Breast epithelium (tissue), 4 donors: ENCODE measurements at regions of chr18 and their contacts with region 1.

Region 1: GRCh38 chr18:11266781-11267480 is 117.6 kb upstream of the PIEZO2 start:
- DNase-seq: no peak
- H3K4me3 ChIP-seq: no peak overlapping the region
- H3K27ac ChIP-seq: no peak overlapping the region
- H3K4me1 ChIP-seq: no peaks in the 10 kb centered on the region
- H3K27me3 ChIP-seq: peaks cover 0 to 3% of the 10 kb centered on the region in 2 donors
- CTCF ChIP-seq: no peak
- POLR2A ChIP-seq: no peak

Region 2: GRCh38 chr18:9898792-9899549 is 1368.0 kb before region 1 on chr18:
- intact Hi-C with region 1: no loop called
- DNase-seq: no peak
- H3K4me3 ChIP-seq: no peak overlapping the region
- H3K27ac ChIP-seq: peak overlapping the region in 1 of 2 donors; percentile 30
- H3K4me1 ChIP-seq: no peaks in the 10 kb centered on the region
- H3K27me3 ChIP-seq: no peaks in the 10 kb centered on the region
- CTCF ChIP-seq: no peak
- POLR2A ChIP-seq: no peak

Region 3: DNA sequence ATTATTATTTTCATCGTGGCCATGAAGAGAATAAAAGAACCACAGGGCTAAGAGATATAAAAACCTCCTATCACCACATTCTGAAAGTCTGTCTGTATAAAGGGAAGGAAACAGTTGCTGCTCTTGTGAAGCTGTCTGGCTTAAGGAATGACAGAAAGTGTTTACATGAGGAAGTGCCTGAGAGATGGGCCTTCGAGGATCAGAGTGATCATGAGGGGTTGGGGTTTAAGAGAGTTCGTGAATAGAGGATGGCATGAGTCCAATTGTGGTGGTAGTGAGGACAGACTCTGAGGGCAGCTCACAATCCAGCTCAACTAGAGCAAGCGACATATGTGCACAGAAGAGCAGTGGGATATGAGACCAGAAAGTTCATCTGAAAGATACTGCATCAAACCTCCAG is 51.7 kb before region 1 on chr18:
- intact Hi-C with region 1: loop called (anchors 2 kb)
- DNase-seq: no peak
- H3K4me3 ChIP-seq: no peak overlapping the region
- H3K27ac ChIP-seq: no peak overlapping the region
- H3K4me1 ChIP-seq: no peaks in the 10 kb centered on the region
- H3K27me3 ChIP-seq: no peaks in the 10 kb centered on the region
- CTCF ChIP-seq: no peak
- POLR2A ChIP-seq: no peak

Region 4: GRCh38 chr18:12027046-12027445 is 760.1 kb after region 1 on chr18:
- intact Hi-C with region 1: no loop called
- DNase-seq: peak in 1 of 2 donors; percentile 77
- H3K4me3 ChIP-seq: no peak overlapping the region
- H3K27ac ChIP-seq: peak overlapping the region; percentile 65 to 74
- H3K4me1 ChIP-seq: no peaks in the 10 kb centered on the region
- H3K27me3 ChIP-seq: no peaks in the 10 kb centered on the region
- CTCF ChIP-seq: no peak
- POLR2A ChIP-seq: no peak